Calu3 (cell line): ENCODE measurements at regions of chr2 and their contacts with region 1.

Region 1: DNA sequence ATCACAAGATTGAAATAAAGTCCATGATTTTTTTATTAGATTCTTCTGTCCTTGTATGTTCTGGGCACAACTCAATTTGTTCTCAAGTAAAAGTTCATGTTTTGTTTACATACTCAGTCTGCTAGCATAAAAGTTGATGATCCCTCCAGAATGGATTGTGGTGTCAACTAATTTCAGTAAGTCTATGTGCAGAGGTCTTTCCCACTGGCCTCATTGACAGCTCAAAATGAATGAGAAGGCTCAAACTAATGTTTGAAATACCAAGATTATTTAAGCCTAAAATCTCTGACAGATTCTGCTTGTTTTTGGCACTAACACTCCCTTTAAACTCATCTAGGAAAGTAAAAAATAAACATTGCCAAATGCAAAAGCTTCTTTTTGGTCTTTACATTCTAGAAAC is 561.2 kb upstream of the CNTNAP5 start:
- DNase-seq: no peak
- H3K4me3 Mint-ChIP-seq: no peak overlapping the region
- H3K27ac Mint-ChIP-seq: no peak overlapping the region
- H3K4me1 Mint-ChIP-seq: no peaks in the 10 kb centered on the region
- H3K27me3 Mint-ChIP-seq: no peaks in the 10 kb centered on the region
- CTCF ChIP-seq: no peak

Region 2: DNA sequence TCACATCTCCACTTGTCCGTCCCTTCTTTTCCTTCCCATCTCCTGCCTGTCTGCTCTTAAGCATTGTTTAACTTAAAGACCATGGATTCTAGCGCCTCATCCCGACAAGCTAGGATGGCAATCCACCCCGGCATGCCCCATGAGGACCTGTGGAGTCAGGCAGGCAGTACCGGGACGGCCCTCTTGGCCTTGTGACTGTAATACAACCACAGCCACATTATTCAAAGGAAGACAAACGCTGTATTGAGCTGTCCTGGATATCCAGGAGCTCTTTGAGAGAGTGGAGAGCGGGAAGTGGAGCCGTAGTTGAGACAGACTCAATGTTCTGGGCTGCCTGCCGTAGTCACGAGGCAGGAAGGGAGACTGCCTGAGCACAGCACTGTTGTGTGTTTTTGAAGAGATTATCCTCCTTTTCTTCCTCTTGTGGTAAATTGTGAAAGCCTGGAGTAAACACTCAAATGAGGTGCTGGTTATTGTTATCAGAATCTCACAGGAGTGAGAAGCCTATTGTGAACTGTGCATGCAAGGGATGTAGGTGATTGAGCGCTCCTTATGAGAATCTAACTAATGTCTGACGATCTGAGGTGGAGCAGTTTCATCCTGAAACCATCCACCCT is 368.6 kb before region 1 on chr2:
- CTCF ChIA-PET with region 1: interaction called, 11 read pairs
- intact Hi-C with region 1: no loop called
- DNase-seq: no peak
- H3K4me3 Mint-ChIP-seq: no peak overlapping the region
- H3K27ac Mint-ChIP-seq: no peak overlapping the region
- H3K4me1 Mint-ChIP-seq: no peaks in the 10 kb centered on the region
- H3K27me3 Mint-ChIP-seq: no peaks in the 10 kb centered on the region
- CTCF ChIP-seq: no peak